ENCODE measurements at regions of chr5 and their contacts with region 1.

Region 1: DNA sequence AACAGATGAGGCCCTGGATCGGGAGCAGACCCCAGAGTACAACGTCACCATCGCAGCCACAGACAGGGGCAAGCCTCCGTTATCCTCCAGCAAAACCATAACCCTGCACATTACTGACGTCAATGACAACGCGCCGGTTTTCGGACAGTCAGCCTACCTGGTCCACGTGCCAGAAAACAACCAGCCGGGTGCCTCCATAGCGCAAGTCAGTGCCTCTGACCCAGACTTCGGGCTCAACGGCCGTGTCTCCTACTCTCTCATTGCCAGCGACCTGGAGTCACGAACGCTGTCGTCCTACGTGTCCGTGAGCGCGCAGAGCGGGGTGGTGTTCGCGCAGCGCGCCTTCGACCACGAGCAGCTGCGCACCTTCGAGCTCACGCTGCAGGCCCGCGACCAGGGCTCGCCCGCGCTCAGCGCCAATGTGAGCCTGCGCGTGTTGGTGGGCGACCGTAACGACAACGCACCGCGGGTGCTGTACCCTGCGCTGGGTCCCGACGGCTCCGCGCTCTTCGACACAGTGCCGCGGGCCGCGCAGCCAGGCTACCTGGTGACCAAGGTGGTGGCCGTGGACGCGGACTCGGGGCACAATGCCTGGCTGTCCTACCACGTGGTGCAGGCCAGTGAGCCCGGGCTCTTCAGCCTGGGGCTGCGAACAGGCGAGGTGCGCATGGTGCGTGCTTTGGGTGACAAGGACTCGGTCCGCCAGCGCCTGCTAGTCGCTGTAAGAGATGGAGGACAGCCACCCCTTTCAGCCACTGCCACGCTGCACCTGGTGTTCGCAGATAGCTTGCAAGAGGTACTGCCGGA is 1.6 kb upstream of the PCDHGA11 start:
- DNase-seq: no peak
- CTCF ChIP-seq: no peak

Region 2: DNA sequence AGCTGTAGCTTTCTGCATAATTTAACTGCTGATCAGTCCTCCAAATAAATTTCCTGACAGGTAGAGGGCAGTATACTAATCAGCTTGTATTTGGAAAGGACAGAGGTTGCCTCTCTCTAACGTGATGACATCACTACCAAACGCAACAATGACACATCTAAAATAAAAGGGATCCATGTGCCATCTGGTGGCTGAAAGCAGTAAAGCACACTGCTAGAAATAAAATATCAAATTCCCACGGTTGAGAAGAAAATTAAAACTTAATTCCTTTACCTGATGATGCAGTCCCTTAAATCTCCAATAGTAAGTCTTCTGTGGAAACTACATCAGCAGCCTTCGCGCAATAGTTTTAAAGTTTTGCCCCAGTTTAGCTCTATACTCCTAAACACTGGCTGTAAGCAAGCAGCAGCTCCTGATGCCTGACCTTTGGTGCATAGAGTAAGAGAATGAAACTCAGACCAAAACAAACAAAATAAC is 145.0 kb after region 1 on chr5:
- in situ Hi-C with region 1: loop called (anchors 5 kb)
- DNase-seq: peak; percentile 54
- CTCF ChIP-seq: peak; percentile 68

Region 3: DNA sequence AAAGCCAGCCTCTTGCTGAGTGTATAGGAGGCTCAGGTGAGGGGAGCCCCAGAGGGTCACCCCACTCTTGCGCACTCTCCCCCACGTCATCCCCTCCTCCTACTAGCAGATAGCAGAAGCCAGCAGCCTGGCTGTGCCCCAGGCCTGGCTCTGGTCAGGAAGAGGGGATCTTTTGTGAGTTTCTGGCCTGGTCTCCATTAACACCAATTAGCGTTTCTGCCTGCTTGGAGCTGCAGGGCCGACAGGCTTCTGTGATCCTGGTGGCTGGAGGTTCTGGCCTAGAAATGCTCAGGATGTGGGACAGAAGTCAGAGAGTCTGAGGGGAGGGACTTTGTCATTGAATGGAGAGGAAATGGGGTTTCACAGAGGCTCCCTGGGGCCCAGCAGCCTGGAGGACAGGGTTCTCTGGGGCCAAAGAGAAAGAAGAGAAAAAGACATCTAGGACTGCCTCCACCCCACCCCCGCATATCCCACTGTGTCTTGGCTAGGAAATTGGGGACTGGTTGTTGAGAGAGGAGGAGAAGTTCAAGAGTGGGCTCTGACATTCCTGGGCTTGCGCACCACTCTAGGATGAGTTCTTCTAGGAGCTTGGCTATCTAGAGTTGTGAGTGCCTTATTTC is 310.2 kb after region 1 on chr5:
- in situ Hi-C with region 1: no loop called
- DNase-seq: no peak
- CTCF ChIP-seq: no peak

Region 4: DNA sequence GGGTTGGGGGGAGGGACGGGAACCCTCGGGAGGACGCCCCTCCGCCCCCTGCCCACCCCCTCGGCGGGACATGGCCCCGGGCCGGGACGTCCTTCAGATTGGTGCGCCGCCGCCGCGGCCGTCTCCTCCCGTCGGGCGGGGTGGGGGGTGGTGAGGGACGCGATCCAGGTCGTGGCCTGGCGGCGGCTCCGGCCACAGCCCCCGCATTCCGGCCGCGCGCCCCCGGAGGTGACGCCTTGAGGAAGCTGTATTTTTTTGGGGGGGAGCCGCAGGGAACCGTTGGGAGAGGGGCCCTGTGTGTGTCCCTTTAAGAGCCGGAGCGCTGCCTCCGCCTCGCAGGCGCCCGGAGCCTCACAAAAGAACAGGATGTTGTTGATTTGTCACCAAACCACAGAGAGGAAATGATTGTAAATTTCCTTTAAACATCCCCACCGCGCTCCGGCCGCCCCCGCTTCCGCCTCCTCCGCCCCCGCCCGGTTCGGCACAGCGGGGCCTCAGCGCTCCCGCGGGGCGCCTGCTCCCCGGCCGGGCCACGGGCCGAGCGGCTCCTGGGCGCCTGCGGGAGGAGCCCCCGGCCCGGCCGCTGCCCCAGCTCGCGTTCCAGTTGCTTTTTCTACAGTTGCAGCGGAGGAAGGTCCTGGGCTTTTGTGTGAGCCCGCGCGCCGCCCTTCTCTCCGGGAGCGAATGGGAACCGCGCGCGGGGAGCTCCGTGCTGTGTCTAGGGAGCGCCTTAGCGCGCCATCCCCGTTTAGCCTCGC is 937.6 kb after region 1 on chr5:
- in situ Hi-C with region 1: no loop called
- DNase-seq: peak; percentile 96
- CTCF ChIP-seq: no peak

Region 5: GRCh38 chr5:142512043-142513042 is 1093.1 kb after region 1 on chr5:
- in situ Hi-C with region 1: no loop called
- DNase-seq: no peak
- CTCF ChIP-seq: no peak